ENCODE measurements at regions of chr1 and their contacts with region 1.

Region 1: DNA sequence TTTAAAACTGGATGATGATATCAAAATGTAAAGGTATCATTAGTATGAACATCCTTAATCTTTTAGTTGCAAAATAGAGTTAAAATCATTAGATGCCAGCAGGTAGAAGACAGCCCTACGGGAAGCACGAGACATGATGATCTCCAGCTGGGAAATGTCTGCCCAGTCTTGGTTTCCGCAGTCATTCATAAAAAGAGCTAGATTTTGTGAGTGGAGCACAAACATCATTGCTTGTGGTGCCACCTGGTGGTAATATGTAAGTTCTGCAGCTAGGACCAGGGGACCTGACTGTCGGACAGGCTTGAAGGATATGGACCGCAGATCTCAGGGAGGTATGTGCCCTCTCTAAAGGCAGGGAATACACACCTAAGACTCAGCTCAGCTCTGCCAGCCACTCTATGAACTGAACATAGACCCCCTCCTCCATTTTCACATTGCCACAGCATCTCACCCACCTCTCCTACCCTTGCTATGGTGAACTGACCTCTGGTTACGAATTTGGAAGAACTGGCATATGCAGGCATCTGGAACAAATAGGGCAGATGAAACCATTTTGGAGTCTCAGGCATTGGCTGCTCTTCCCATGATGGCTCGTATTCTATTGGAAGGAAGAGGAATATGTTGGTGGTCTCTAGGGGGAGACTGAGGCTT is 9.2 kb downstream of the FCMR start:
- DNase-seq: peak; percentile 56 to 65
- H3K4me3 ChIP-seq: no peak overlapping the region
- H3K27ac ChIP-seq: no peak overlapping the region
- H3K4me1 ChIP-seq: peaks cover 7% of the 10 kb centered on the region
- H3K27me3 ChIP-seq: no peaks in the 10 kb centered on the region
- CTCF ChIP-seq: peak; percentile 83

Region 2: DNA sequence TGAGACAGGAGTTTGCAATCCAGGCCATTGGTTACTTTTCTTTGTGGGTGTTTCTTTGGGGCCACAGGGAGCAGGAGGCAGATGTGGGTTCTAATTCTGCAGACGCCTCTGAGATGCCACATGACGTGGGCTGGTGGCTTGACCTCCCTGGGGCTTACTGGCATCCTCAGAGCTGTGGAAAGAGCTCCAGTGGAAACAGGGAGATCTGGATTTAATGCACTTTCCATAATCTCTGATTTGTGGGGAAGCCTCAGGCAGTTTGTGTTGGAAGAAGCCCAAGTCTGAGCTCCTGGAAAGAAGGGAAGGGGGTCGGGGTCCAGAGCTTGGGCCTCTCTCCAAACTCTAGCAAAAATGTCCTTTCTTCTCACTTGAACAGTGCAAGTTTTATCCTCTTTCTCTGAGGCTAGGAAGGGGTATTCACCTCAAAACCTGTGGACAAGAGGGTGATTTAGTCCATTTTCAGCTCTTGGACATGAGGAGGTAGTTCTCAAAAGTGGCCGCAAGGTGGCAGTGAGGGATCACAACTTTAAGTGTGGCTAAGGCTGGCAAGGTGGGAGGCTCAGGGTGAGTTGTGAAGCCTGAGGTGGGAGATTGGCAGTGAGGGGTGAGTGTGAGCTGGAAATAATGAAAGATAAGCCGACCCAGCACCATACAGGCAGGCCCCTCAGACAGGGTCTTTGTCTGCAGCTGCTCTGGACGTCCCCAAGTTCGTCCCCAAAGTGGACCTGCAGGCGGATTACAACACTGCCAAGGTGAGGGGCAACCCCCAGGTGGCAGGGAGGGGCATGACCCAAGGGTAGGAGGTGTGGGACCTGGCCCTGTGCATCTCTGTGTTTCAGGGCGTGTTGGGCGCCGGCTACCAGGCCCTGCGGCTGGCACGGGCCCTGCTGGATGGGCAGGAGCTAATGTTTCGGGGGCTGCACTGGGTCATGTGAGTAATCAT is 433.1 kb before region 1 on chr1:
- CTCF ChIA-PET with region 1: no interaction called
- POLR2A ChIA-PET with region 1: no interaction called
- intact Hi-C with region 1: loop called (anchors 5 kb)
- DNase-seq: peak; percentile 51 to 63
- H3K4me3 ChIP-seq: no peak overlapping the region
- H3K27ac ChIP-seq: no peak overlapping the region
- H3K4me1 ChIP-seq: no peaks in the 10 kb centered on the region
- H3K27me3 ChIP-seq: no peaks in the 10 kb centered on the region
- CTCF ChIP-seq: peak; percentile 93

Region 3: GRCh38 chr1:206635080-206635977 is 277.2 kb before region 1 on chr1 and contains the start of gene DYRK3:
- CTCF ChIA-PET with region 1: interaction called, 7 read pairs
- POLR2A ChIA-PET with region 1: no interaction called
- intact Hi-C with region 1: loop called (anchors 1 kb)
- DNase-seq: peak; percentile 64 to 95
- H3K4me3 ChIP-seq: peak within 1 kb of the TSS; percentile 80
- H3K27ac ChIP-seq: no peak within 1 kb of the TSS
- H3K4me1 ChIP-seq: peaks cover 10% of the 10 kb centered on the region
- H3K27me3 ChIP-seq: no peaks in the 10 kb centered on the region
- CTCF ChIP-seq: no peak
- total RNA-seq, gene DYRK3: 3.3 and 3.9 TPM in 2 replicates

Region 4: DNA sequence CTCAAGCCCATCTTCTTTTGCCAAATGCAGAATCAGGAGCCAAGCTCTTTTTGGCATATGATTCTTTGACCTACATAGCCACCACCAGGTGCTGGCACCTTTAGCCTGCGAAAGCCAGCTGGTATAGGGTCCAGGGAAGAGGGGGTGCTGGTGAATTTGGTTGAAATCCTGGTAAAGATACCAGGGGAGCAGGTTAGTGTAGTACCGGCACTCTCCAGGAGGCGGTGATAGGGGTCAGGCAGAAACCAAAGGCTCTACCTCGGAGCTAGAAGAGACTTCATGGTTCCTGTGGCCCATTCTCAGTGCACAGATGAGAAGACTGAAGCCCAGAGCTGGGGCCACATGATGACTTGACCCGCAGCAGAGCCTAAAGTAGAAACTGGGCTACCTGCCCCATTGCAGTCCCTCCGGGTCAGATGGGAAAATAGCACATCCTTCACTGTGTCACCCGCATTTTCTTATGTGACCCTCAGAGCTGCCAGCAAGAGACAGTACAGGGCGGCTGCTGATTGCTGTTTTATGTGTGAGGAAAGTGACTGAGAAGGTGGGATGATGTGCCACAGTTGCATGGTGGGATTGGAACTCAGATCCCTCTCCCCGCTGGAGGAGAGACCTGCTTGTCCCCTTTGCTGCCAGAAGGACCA is 177.9 kb before region 1 on chr1:
- CTCF ChIA-PET with region 1: interaction called, 8 read pairs
- POLR2A ChIA-PET with region 1: no interaction called
- intact Hi-C with region 1: loop called (anchors 1 kb)
- DNase-seq: peak in 1 of 2 experiments; percentile 37
- H3K4me3 ChIP-seq: no peak overlapping the region
- H3K27ac ChIP-seq: no peak overlapping the region
- H3K4me1 ChIP-seq: no peaks in the 10 kb centered on the region
- H3K27me3 ChIP-seq: no peaks in the 10 kb centered on the region
- CTCF ChIP-seq: peak; percentile 89

Region 5: DNA sequence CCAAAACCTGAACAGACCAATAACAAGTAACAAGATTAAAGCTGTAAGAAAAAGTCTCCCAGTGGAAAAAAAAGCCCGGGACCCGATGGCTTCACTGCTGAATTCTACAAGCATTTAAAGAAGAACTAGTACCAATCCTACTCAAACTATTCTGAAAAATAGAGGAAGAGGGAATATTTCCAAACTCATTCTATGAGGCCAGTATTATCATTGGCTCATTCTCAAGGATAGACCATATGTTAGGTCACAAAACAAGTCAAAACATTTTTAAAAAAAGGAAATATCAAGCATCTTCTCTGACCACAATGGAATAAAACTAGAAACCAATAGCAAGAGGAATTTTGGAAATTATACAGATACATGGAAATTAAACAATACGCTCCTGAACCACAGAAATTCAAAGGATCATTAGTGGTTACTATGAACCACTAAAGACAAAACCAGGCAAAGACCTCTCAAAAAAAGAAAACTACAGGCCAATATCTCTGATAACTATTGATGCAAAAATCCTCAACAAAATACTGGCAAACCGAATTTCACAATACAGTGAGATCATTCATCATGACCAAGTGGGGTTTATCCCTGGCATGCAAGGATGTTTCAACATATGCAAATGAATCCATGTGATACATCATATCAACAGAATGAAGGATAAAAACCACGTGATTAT is 61.1 kb before region 1 on chr1:
- CTCF ChIA-PET with region 1: no interaction called
- POLR2A ChIA-PET with region 1: no interaction called
- intact Hi-C with region 1: no loop called
- DNase-seq: no peak
- H3K4me3 ChIP-seq: no peak overlapping the region
- H3K27ac ChIP-seq: no peak overlapping the region
- H3K4me1 ChIP-seq: no peaks in the 10 kb centered on the region
- H3K27me3 ChIP-seq: peaks cover 42% of the 10 kb centered on the region
- CTCF ChIP-seq: no peak

Region 6: GRCh38 chr1:206895830-206896242 is 16.7 kb before region 1 on chr1:
- CTCF ChIA-PET with region 1: interaction called, 10 read pairs
- POLR2A ChIA-PET with region 1: no interaction called
- intact Hi-C with region 1: no loop called
- DNase-seq: peak in 1 of 2 experiments; percentile 27
- H3K4me3 ChIP-seq: no peak overlapping the region
- H3K27ac ChIP-seq: peak overlapping the region; percentile 24; the same call in 1 of the 2 replicates
- H3K4me1 ChIP-seq: peaks cover 37% of the 10 kb centered on the region
- H3K27me3 ChIP-seq: no peaks in the 10 kb centered on the region
- CTCF ChIP-seq: no peak

Region 7: GRCh38 chr1:207077470-207078377 is 165.2 kb after region 1 on chr1:
- CTCF ChIA-PET with region 1: interaction called, 3 read pairs
- POLR2A ChIA-PET with region 1: no interaction called
- intact Hi-C with region 1: loop called (anchors 1 kb)
- DNase-seq: peak; percentile 61 to 67
- H3K4me3 ChIP-seq: no peak overlapping the region
- H3K27ac ChIP-seq: no peak overlapping the region
- H3K4me1 ChIP-seq: no peaks in the 10 kb centered on the region
- H3K27me3 ChIP-seq: no peaks in the 10 kb centered on the region
- CTCF ChIP-seq: peak; percentile 95